ENCODE measurements at regions of chr5 and their contacts with region 1.

Region 1: GRCh38 chr5:142143878-142144277 is 35.3 kb downstream of the NDFIP1 start:
- DNase-seq: no peak
- H3K4me3 ChIP-seq: no peak overlapping the region
- H3K27ac ChIP-seq: no peak overlapping the region
- H3K4me1 ChIP-seq: no peaks in the 10 kb centered on the region
- H3K27me3 ChIP-seq: no peaks in the 10 kb centered on the region
- CTCF ChIP-seq: peak; percentile 35 to 76 (median 62)
- POLR2A ChIP-seq: no peak

Region 2: DNA sequence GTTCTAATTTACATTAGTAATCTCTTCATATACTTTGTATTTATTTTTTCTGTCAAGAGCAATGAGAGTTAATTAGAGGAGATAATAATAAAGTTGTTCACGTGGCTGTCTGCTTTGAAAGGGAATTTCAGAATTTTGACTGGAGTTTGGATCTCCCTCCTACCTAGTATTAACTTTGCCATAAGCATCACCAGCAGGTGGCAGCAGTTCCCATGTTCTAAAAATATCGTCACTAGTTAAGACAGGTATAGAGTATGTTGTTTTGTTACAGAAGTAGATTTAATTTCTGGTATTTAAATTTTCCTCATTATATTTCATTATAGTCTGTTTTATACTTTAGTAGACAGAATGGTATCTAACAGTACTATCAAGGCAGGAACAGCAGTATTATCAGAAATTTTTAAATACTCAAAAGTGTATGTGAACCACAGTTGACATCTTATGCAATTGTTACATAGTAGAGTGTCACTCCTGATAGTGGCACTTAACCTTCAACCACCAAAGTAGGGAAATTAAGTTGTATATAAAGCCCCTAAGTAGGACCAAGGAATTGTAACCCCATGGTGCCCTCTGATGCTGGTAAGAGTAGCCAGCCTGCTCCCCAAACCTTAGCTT is 151.4 kb before region 1 on chr5:
- intact Hi-C with region 1: loop called in 1 of 2 experiments (anchors 5 kb)
- DNase-seq: peak; percentile 46 to 93 (median 78)
- H3K4me3 ChIP-seq: no peak overlapping the region
- H3K27ac ChIP-seq: no peak overlapping the region
- H3K4me1 ChIP-seq: peaks cover 0 to 8% of the 10 kb centered on the region in 2 donors
- H3K27me3 ChIP-seq: no peaks in the 10 kb centered on the region
- CTCF ChIP-seq: peak; percentile 73 to 81 (median 74)
- POLR2A ChIP-seq: no peak

Region 3: GRCh38 chr5:142012792-142013388 is 131.0 kb before region 1 on chr5 and contains the start of gene GNPDA1:
- intact Hi-C with region 1: no loop called
- DNase-seq: peak; percentile 86 to 91 (median 87)
- H3K4me3 ChIP-seq: peak within 1 kb of the TSS; percentile 28 to 90 (median 80)
- H3K27ac ChIP-seq: peak within 1 kb of the TSS; percentile 78 to 96 (median 93)
- H3K4me1 ChIP-seq: peaks cover 19 to 20% of the 10 kb centered on the region in 2 donors
- H3K27me3 ChIP-seq: no peaks in the 10 kb centered on the region
- CTCF ChIP-seq: peak in 3 of 6 experiments; percentile 18 to 52 (median 29)
- POLR2A ChIP-seq: peak; percentile 66 to 96
- total RNA-seq, gene GNPDA1: 23.3 to 92.5 (median 61.4) TPM

Region 4: GRCh38 chr5:142108432-142109330 is 35.2 kb before region 1 on chr5 and contains the start of gene NDFIP1:
- intact Hi-C with region 1: loop called in 1 of 2 experiments (anchors 2 kb)
- DNase-seq: peak; percentile 82 to 89 (median 84)
- H3K4me3 ChIP-seq: peak within 1 kb of the TSS; percentile 37 to 93 (median 74)
- H3K27ac ChIP-seq: peak within 1 kb of the TSS; percentile 86 to 99 (median 98)
- H3K4me1 ChIP-seq: peaks cover 20 to 36% of the 10 kb centered on the region in 2 donors
- H3K27me3 ChIP-seq: no peaks in the 10 kb centered on the region
- CTCF ChIP-seq: peak in 3 of 6 experiments; percentile 15 to 21 (median 21)
- POLR2A ChIP-seq: peak; percentile 88 to 97
- total RNA-seq, gene NDFIP1: 70.6 to 313 (median 89.4) TPM

Region 5: DNA sequence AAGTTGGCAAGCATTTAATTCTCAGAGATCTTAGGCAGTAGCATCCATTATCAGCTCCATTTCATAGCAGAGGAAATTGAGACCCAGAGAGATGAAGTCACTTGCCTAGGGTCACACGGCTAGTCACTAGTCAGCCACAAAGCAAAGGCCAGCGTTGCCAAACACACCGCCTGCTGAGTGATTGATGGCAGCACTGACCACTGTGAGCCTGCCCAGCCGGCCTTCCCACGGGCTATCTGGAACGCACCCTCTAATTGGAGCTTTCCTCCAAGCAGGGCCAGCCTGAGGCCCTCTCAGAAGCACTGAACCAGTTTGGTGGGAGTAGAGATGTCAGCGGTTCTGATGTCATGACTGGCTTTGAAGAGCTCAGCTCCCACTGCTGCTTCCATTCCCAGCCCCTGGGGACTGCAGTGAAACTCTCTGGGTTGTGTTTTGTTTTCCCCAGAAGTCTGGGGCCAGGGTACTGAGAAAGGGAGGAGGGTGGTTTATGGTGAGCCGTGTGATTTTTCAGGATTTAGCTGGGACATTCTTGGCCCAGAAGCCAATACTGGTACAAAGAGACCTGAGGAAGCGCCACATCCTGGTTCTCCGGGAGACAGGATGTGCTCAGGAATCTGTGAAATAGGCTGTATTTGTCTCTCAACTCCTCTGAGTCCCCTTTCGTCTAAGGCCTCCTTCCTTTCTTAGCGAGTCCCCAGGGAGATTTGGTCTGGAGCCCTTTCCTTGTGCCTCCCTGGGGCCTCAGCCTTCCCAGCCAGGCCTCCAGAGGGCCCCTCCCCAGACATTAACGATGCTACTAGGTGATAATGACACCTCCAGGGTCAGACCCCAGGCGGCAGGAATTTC is 136.4 kb after region 1 on chr5:
- intact Hi-C with region 1: no loop called
- DNase-seq: peak; percentile 24 to 88 (median 61)
- H3K4me3 ChIP-seq: no peak overlapping the region
- H3K27ac ChIP-seq: peak overlapping the region in 4 of 5 donors; percentile 32 to 83 (median 50)
- H3K4me1 ChIP-seq: peaks cover 0 to 8% of the 10 kb centered on the region in 2 donors
- H3K27me3 ChIP-seq: no peaks in the 10 kb centered on the region
- CTCF ChIP-seq: no peak
- POLR2A ChIP-seq: no peak